ENCODE measurements at regions of chr4 and their contacts with region 1.

Region 1: DNA sequence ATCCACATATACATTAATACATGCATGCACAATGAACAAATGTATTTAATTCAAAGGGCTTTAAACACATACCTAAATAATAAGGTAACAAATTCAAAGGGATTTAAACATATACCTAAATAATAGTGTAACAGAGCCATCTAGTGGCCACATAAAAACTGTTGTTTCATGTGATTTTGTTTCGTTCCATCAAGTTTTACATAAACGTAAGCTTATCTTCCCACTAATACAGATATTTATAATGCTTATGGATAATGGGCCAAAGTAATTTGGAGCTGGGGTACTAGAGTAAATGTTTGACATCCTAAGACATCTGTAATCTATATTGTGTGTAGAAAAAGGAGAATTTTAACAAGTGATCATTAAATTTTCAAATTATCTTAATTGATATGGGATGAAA is 82.3 kb downstream of the PRSS12 start:
- DNase-seq: peak in 3 of 14 experiments; percentile 59 to 72 (median 71)
- ATAC-seq: no peak
- H3K4me3 ChIP-seq: no peak overlapping the region
- H3K4me3 Mint-ChIP-seq: no peak overlapping the region
- H3K27ac ChIP-seq: no peak overlapping the region
- H3K27ac Mint-ChIP-seq: no peak overlapping the region
- H3K4me1 ChIP-seq: no peaks in the 10 kb centered on the region
- H3K4me1 Mint-ChIP-seq: no peaks in the 10 kb centered on the region
- H3K27me3 ChIP-seq: no peaks in the 10 kb centered on the region
- H3K27me3 Mint-ChIP-seq: peaks cover 5% of the 10 kb centered on the region
- CTCF ChIP-seq: peak; percentile 93

Region 2: DNA sequence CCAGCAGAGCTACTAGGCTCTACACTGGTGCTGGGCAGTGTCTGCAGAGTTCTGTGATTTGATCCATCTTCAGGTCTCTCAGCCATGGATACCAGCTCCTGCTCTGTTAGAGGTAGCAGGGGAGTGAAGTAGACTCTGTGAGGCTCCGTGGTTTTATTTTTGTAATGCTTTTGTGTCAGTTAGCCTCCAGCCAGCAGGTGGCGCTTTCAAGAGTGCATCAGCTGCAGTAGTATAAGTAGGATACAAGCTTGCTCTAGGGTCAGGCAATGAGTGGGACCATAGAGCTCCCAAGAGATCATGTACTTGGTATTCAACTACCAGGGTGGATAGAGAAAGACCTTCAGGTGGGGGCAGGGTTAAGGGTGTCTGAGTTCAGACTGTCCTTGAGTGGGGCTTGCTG is 822.6 kb before region 1 on chr4:
- CTCF ChIA-PET with region 1: no interaction called
- POLR2A ChIA-PET with region 1: no interaction called
- intact Hi-C with region 1: loop called in 1 of 2 experiments (anchors 5 kb)
- DNase-seq: peak in 4 of 14 experiments; percentile 6 to 28 (median 10)
- ATAC-seq: no peak
- H3K4me3 ChIP-seq: no peak overlapping the region
- H3K4me3 Mint-ChIP-seq: no peak overlapping the region
- H3K27ac ChIP-seq: no peak overlapping the region
- H3K27ac Mint-ChIP-seq: no peak overlapping the region
- H3K4me1 ChIP-seq: no peaks in the 10 kb centered on the region
- H3K4me1 Mint-ChIP-seq: no peaks in the 10 kb centered on the region
- H3K27me3 ChIP-seq: no peaks in the 10 kb centered on the region
- H3K27me3 Mint-ChIP-seq: no peaks in the 10 kb centered on the region
- CTCF ChIP-seq: no peak

Region 3: GRCh38 chr4:118076958-118077766 is 193.3 kb before region 1 on chr4:
- CTCF ChIA-PET with region 1: no interaction called
- POLR2A ChIA-PET with region 1: no interaction called
- intact Hi-C with region 1: loop called in 1 of 2 experiments (anchors 5 kb)
- DNase-seq: peak in 2 of 14 experiments; percentile 7 to 12
- ATAC-seq: peak; percentile 26
- H3K4me3 ChIP-seq: no peak overlapping the region
- H3K4me3 Mint-ChIP-seq: no peak overlapping the region
- H3K27ac ChIP-seq: no peak overlapping the region
- H3K27ac Mint-ChIP-seq: no peak overlapping the region
- H3K4me1 ChIP-seq: no peaks in the 10 kb centered on the region
- H3K4me1 Mint-ChIP-seq: no peaks in the 10 kb centered on the region
- H3K27me3 ChIP-seq: no peaks in the 10 kb centered on the region
- H3K27me3 Mint-ChIP-seq: no peaks in the 10 kb centered on the region
- CTCF ChIP-seq: no peak

Region 4: DNA sequence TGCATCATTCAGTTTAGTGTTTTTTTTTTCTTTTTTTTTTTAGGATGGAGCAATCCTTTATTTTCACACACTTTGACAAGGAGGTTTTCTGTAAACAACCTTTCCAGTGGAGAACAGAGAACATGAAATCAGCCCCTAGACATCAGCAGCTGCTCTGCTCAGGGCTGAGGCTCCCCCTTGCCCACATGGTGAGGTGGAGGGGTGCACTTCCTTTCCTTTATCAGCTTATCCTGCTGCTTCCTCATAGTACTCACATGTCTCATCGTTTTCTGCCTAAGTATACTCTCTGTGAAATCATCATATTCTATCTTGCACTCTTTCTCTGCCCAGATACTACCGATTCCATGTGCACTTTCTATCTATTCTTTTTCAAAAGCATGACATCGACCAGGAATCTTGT is 129.9 kb after region 1 on chr4:
- CTCF ChIA-PET with region 1: no interaction called
- POLR2A ChIA-PET with region 1: no interaction called
- intact Hi-C with region 1: no loop called
- DNase-seq: no peak
- ATAC-seq: no peak
- H3K4me3 ChIP-seq: no peak overlapping the region
- H3K4me3 Mint-ChIP-seq: no peak overlapping the region
- H3K27ac ChIP-seq: no peak overlapping the region
- H3K27ac Mint-ChIP-seq: no peak overlapping the region
- H3K4me1 ChIP-seq: no peaks in the 10 kb centered on the region
- H3K4me1 Mint-ChIP-seq: no peaks in the 10 kb centered on the region
- H3K27me3 ChIP-seq: peaks cover 0 to 7% of the 10 kb centered on the region in 2 experiments
- H3K27me3 Mint-ChIP-seq: peaks cover 22% of the 10 kb centered on the region
- CTCF ChIP-seq: no peak

Region 5: GRCh38 chr4:118586357-118586790 is 315.9 kb after region 1 on chr4:
- CTCF ChIA-PET with region 1: no interaction called
- POLR2A ChIA-PET with region 1: no interaction called
- intact Hi-C with region 1: loop called in 1 of 2 experiments (anchors 5 kb)
- DNase-seq: no peak
- ATAC-seq: no peak
- H3K4me3 ChIP-seq: no peak overlapping the region
- H3K4me3 Mint-ChIP-seq: no peak overlapping the region
- H3K27ac ChIP-seq: no peak overlapping the region
- H3K27ac Mint-ChIP-seq: no peak overlapping the region
- H3K4me1 ChIP-seq: no peaks in the 10 kb centered on the region
- H3K4me1 Mint-ChIP-seq: peaks cover 10% of the 10 kb centered on the region
- H3K27me3 ChIP-seq: peaks cover 4 to 29% of the 10 kb centered on the region in 2 experiments
- H3K27me3 Mint-ChIP-seq: peaks cover 54% of the 10 kb centered on the region
- CTCF ChIP-seq: no peak

Measured in CD4-positive, alpha-beta T cell (primary cell).